Activated CD8-positive, alpha-beta T cell treated with anti-CD3 and anti-CD28 coated beads for 36 hours (primary cell): ENCODE measurements at regions of chr6 and their contacts with region 1.

Region 1: DNA sequence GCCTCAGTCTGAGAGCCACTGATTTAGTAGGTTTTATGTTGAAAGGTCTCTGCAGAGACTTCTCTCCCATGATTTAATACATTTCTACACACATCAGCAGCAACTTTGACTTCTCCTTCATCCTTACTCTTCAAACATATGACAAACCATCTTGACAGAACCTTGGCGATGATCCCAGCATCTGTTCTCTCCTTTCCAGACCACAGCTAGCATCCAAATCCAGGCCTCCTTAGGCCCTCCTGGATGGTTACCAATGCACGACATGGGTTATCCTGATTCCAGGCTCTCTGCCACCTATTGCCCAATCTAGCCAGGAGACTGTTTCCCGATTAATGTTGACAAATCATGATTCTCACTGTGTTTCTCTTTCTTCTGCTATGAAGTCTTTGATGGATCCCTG is 16.8 kb downstream of the LAMA4 start:
- DNase-seq: no peak
- ATAC-seq: no peak
- H3K4me3 Mint-ChIP-seq: no peak overlapping the region
- H3K27ac Mint-ChIP-seq: no peak overlapping the region
- H3K4me1 Mint-ChIP-seq: peaks cover 19% of the 10 kb centered on the region
- H3K27me3 Mint-ChIP-seq: peaks cover 18% of the 10 kb centered on the region
- CTCF ChIP-seq: no peak

Region 2: DNA sequence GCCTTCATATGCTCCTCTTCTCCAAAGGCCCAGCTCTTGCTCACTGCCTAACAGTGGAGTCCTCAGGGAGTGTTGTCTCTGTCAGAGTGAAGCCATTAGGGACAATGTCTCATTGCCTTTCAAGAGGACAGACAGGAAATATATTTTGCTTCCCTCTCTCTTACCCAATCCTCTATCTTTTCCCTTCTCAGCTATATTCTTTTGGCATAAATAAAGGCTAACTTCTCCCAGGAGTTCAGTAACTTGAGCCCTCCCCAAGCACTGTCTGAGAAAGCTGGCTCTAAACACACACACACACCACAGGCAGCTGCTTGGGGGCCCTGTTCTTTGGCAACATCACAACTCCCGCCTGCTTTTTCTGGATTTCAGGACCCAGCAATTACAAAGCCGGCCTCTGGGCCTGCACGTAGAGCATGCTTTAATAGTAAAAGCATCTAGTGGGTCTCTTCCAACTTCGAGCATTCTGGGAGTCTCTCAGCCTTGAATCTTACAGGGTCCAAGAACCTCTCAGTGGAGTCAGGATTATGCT is 51.5 kb after region 1 on chr6:
- CTCF ChIA-PET with region 1: interaction called, 3 read pairs
- POLR2A ChIA-PET with region 1: no interaction called
- intact Hi-C with region 1: loop called (anchors 5 kb)
- DNase-seq: no peak
- ATAC-seq: no peak
- H3K4me3 Mint-ChIP-seq: no peak overlapping the region
- H3K27ac Mint-ChIP-seq: no peak overlapping the region
- H3K4me1 Mint-ChIP-seq: peaks cover 25% of the 10 kb centered on the region
- H3K27me3 Mint-ChIP-seq: peaks cover 23% of the 10 kb centered on the region
- CTCF ChIP-seq: no peak